ENCODE measurements at regions of chrX and their contacts with region 1.

Region 1: DNA sequence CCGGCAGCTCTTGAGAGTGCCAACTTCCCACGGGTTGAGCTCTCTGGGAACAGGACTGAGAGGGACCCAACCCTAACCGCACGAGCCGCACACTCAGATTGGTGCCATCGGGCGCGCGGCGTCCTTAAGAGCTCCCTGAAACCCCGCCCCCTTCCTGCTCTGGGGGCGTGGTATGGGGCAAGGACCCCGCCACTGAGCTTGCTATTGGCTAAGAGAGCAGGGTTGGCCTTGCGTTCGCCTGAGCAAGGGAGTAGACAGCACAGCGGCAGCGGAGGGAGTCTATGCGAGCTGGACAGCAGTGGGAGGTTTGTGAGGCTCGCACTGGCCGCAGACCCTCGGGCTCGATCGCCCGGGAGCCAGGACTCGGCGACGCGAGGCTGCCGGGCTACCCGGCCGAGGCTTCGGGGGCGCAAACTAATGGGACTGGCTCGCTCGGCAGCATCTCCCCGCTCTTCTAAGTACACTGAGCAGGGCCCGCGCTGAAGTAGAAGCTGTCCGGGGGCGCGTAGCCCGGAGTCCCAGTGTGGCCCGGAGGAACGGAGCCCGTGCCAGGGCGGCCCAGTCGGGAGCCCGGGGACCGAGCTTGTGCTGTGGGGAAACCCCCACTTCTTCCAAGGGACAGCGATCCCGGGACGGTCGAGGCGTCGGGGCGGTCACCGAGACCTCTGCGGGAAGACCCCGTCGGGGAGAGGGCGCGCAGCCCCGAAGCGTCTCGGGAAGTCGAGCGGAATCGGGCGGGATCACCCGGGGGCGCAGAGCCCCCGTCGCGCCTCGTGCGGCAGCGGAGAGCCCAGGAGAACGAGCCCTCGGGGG is at the start of gene EFNB1:
- DNase-seq: peak; percentile 70 to 86 (median 80)
- ATAC-seq: peak; percentile 93
- H3K4me3 ChIP-seq: peak within 1 kb of the TSS; percentile 41
- H3K27ac ChIP-seq: no peak within 1 kb of the TSS
- H3K4me1 ChIP-seq: peaks cover 0 to 22% of the 10 kb centered on the region in 2 experiments; a peak in 2 of 5 replicates
- H3K27me3 ChIP-seq: peaks cover 0 to 7% of the 10 kb centered on the region in 2 experiments; a peak in 1 of 5 replicates
- CTCF ChIP-seq: no peak
- EP300 ChIP-seq: no peak
- POLR2A ChIP-seq: no peak
- RAD21 ChIP-seq: no peak
- polyA plus RNA-seq, gene EFNB1: 0.01 TPM in 1 of 2 experiments, not detected in the other

Region 2: GRCh38 chrX:69060631-69061408 is 231.9 kb after region 1 on chrX:
- CTCF ChIA-PET with region 1: interaction called, 6 read pairs
- POLR2A ChIA-PET with region 1: interaction called, 4 read pairs
- in situ Hi-C with region 1: loop called (anchors 10 kb)
- intact Hi-C with region 1: loop called (anchors 2 kb)
- DNase-seq: no peak
- ATAC-seq: peak; percentile 55; the same call in 1 of the 3 replicates
- H3K4me3 ChIP-seq: no peak overlapping the region
- H3K27ac ChIP-seq: no peak overlapping the region
- H3K4me1 ChIP-seq: no peaks in the 10 kb centered on the region
- H3K27me3 ChIP-seq: peaks cover 0 to 16% of the 10 kb centered on the region in 2 experiments; a peak in 1 of 5 replicates
- CTCF ChIP-seq: peak in 2 of 3 experiments; percentile 32; a peak in 3 of 6 replicates
- EP300 ChIP-seq: no peak
- POLR2A ChIP-seq: no peak
- RAD21 ChIP-seq: peak; percentile 19 to 51; a peak in 3 of 4 replicates

Region 3: GRCh38 chrX:69222103-69223090 is 393.5 kb after region 1 on chrX:
- CTCF ChIA-PET with region 1: no interaction called
- POLR2A ChIA-PET with region 1: no interaction called
- in situ Hi-C with region 1: loop called (anchors 10 kb)
- intact Hi-C with region 1: loop called (anchors 1 kb)
- DNase-seq: peak; percentile 61 to 71 (median 68)
- ATAC-seq: peak; percentile 88
- H3K4me3 ChIP-seq: no peak overlapping the region
- H3K27ac ChIP-seq: no peak overlapping the region
- H3K4me1 ChIP-seq: no peaks in the 10 kb centered on the region
- H3K27me3 ChIP-seq: no peaks in the 10 kb centered on the region
- CTCF ChIP-seq: peak; percentile 65 to 79 (median 73)
- EP300 ChIP-seq: no peak
- POLR2A ChIP-seq: no peak
- RAD21 ChIP-seq: peak; percentile 68 to 74

Region 4: DNA sequence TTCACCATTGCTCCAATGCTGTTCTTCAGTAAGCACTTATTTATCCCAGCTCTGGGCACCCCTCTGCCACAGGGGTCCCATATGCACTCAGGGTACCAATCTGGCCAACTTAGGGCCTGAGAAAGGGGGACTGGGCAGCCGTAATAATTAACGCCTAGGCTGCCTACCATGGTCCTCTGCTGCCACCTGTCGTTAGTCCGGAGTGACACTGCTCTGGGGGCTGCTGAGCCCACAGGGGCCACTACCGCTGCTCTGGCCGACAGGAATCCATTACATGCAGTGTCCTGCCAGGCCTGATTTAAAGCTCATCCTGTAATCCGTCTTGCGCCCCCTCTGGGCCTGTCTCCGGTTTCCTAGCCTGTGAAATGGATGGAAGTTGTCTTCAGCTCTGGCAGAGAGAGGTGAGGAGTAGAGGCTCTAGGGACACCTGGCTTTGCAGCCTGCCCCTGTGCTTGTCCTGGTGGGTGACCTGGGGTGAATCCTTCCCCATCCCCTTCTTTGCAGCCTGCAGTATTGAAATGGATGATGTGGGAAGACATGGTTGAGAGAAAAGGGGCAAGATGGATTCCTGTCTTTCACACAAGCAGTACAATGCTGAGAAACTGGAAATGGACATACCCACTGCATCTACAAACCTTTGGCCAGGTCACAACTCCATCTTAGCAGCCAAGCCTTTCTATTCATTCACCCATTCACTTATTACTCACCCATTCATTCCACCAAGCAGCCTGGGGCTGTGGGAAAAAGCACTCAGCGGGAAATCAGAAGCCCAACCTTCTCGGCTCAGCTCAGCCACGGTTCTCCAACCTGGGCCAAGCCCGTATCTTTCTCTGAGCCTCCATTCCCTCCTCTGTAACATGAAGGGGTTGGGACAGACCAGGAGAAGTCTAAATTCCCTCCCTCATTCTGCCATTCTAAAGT is 558.9 kb after region 1 on chrX:
- CTCF ChIA-PET with region 1: no interaction called
- POLR2A ChIA-PET with region 1: no interaction called
- in situ Hi-C with region 1: loop called (anchors 10 kb)
- intact Hi-C with region 1: loop called (anchors 1 kb)
- DNase-seq: peak; percentile 54 to 66 (median 62)
- ATAC-seq: peak; percentile 92
- H3K4me3 ChIP-seq: no peak overlapping the region
- H3K27ac ChIP-seq: no peak overlapping the region
- H3K4me1 ChIP-seq: no peaks in the 10 kb centered on the region
- H3K27me3 ChIP-seq: no peaks in the 10 kb centered on the region
- CTCF ChIP-seq: peak; percentile 61 to 78 (median 70)
- EP300 ChIP-seq: no peak
- POLR2A ChIP-seq: no peak
- RAD21 ChIP-seq: peak; percentile 37 to 68; a peak in 3 of 4 replicates